AG04450 (cell line): ENCODE measurements at regions of chr12 and their contacts with region 1.

Region 1: GRCh38 chr12:56020423-56021184 is at the start of gene IKZF4:
- DNase-seq: no peak
- H3K4me3 ChIP-seq: peak within 1 kb of the TSS; percentile 57
- H3K27ac ChIP-seq: peak within 1 kb of the TSS; percentile 57
- H3K27me3 ChIP-seq: no peaks in the 10 kb centered on the region
- CTCF ChIP-seq: no peak
- polyA plus RNA-seq, gene IKZF4: 3.9 and 4.7 TPM in 2 replicates

Region 2: DNA sequence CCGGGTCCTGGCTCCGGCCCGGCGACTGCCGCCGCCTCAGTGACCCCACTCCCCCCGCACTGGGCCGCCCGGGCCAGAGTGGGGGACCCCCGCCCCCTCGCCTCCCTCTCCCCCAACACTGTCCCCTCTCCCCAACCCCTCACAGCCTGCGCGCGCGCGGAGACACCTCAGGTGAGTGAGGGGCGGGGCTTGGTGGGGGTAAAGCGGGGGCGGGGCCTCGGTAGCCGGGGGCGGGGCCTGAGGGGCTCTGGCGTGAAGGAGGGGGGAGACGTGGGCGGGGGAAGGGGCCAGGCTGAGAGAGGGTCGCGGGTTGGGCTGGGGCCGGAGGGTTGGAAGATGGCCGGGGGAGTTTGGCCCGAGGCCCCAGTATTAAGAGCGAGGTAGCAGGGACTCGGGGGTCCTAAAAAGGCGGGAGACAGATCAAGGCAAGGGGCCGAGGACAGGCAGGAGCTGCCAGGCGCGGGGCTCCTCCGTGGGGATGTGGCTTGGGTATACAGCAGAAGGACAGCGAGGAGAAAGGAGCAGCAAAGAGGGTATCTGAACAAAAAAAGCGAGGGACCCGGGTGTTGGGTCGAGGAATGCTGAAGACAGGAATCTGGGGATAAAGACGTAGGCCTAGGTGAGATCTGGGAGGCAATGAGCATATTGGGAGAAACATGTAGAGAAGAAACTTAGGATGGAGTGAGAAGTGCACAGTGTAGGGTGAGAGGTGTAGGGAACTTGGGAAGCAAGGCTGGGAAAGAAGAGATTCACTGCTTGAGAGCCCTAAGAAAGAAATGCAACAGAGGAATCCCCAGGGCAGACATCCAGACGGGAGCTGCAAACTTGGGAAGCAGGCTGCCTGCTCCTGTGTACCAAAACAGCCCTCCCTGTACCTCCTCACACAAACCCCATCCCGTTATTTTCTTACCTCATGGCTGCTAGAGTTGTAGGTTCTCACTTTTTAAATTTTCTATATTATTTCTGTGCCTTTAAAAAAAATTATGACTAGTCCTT is 12.7 kb before region 1 on chr12:
- CTCF ChIA-PET with region 1: interaction called, 3 read pairs
- POLR2A ChIA-PET with region 1: interaction called, 20 read pairs
- DNase-seq: no peak
- H3K4me3 ChIP-seq: peak overlapping the region; percentile 68
- H3K27ac ChIP-seq: no peak overlapping the region
- H3K27me3 ChIP-seq: no peaks in the 10 kb centered on the region
- CTCF ChIP-seq: no peak